Activated CD4-positive, alpha-beta memory T cell treated with anti-CD3 and anti-CD28 coated beads, Interleukin-2, amount 10 ng/mL, durations not matched to agents 7 days and 5 days (primary cell): ENCODE measurements at regions of chr7 and their contacts with region 1.

Region 1: DNA sequence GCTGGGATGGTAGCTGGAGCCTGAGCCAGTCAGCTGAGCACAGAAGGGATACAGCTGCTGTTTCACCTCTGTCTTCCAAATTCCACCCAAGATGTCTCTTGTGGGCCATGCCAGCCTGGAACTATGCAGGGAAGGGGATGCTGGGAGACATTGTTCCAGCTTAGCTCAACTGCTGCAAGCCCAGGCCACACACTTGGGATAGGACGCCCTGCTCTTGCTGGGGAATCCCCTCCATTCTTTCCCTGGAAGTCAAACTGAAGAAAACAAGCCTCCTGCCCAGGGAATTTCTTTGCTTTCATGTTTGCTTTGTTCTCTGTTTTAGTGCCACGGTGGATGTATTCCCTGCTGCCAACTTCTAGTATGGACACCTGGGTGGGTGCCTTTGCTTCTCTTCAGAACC is 55.2 kb upstream of the CDK13 start:
- DNase-seq: no peak
- H3K4me3 Mint-ChIP-seq: no peak overlapping the region
- H3K27ac Mint-ChIP-seq: no peak overlapping the region
- H3K4me1 Mint-ChIP-seq: no peaks in the 10 kb centered on the region
- H3K27me3 Mint-ChIP-seq: peaks cover 15% of the 10 kb centered on the region

Region 2: DNA sequence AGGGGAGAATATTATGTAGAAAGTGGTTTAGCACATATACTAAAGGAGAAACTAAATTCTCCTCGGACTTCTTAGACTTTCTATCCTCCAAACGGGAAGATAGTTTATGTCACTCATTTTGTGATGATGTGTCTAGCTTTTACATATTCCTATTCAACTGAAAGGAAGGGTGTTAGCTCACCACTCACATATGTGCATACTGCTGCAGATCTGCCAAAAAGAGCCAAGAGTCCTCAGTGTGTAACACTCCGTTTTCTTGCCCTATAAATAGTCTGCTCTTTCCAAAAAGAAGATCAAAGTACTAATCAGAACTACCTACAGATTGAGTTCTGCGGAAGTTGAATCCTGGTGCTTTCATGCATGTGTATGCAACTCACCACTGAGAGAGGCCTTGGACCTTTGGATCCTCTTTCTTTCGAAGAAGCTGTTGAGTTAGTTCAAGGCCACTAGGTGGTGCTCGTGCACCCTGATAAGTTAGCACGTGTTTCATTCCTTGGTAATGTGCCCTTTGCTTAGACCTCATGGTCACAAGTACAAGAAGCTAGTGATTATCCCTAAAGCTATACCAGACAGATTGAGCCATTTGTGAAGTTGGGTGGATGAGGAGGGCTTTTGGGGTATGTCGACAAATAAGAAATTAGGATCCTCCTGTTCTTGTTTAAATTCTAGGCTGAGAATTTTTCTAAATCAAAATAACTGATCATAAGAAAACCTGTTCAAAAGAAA is 314.6 kb before region 1 on chr7:
- CTCF ChIA-PET with region 1: interaction called, 28 read pairs
- POLR2A ChIA-PET with region 1: no interaction called
- DNase-seq: peak; percentile 78
- H3K4me3 Mint-ChIP-seq: no peak overlapping the region
- H3K27ac Mint-ChIP-seq: no peak overlapping the region
- H3K4me1 Mint-ChIP-seq: peaks cover 12% of the 10 kb centered on the region
- H3K27me3 Mint-ChIP-seq: no peaks in the 10 kb centered on the region

Region 3: DNA sequence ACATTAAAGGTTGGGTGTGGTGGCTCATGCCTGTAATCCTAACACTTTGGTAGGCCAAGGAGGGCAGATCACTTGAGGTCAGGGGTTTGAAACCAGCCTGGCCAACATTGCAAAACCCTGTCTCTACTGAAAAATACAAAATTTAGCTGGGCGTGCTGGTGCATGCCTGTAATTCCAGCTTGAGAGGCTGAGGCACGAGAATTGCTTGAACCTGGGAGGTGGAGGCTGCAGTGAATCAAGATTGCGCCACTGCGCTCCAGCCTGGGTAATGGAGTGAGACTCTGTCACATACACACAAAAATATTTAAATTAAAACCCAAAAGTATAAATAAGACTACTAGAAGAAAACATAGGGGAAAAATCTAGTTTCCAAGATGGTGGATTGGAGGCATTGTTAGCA is 13.2 kb after region 1 on chr7:
- CTCF ChIA-PET with region 1: interaction called, 13 read pairs
- POLR2A ChIA-PET with region 1: no interaction called
- DNase-seq: no peak
- H3K4me3 Mint-ChIP-seq: no peak overlapping the region
- H3K27ac Mint-ChIP-seq: no peak overlapping the region
- H3K4me1 Mint-ChIP-seq: no peaks in the 10 kb centered on the region
- H3K27me3 Mint-ChIP-seq: no peaks in the 10 kb centered on the region

Region 4: DNA sequence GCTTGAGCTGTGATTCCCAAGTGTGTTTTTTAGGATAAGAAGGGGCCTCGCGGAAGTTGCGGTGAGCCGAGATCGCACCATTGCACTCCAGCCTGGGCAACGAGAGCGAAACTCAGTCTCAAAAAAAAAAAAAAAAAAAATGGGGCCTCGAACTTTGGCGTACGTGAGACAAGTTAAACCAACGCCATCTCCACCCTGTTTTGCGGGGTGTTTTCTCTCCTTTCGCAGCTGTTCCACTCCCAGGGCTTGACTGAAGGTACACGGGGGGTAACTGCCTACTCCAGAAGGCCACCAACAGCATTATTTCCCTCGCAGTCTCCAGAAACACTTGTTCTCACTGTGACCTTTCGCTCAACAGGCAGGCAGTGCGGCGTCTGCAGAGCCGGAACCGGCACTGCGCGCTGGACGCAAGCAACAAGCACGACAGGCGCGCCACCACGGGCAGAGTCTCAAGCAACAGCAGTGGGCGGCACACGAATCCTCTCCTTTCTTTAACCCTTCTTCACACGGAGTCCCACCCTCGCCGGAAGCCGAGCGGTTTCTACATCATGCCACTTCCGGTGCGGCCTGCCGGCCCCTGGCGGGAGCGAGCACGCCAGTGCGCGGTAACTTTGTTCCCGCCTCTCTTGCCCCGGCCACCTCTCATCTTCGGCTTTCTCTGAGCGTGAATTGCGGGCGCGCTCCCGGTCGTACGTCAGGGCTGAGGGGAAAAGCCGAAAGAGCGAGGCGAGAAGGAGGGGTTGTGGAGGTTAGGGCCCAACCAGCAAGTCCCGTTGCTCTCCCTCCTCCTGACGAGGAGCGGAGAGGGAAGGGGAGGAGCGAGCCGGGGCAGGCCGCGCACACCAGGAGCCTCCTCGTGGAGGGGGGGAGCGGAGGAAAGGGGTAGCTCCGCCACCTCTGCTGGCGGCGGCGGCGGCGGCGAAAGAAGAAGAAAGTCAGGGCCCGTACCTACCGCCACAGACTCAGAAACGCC is 54.3 kb after region 1 on chr7:
- CTCF ChIA-PET with region 1: interaction called, 18 read pairs
- POLR2A ChIA-PET with region 1: interaction called, 7 read pairs
- DNase-seq: peak; percentile 99
- H3K4me3 Mint-ChIP-seq: peak overlapping the region; percentile 97
- H3K27ac Mint-ChIP-seq: peak overlapping the region; percentile 100
- H3K4me1 Mint-ChIP-seq: peaks cover 35% of the 10 kb centered on the region
- H3K27me3 Mint-ChIP-seq: no peaks in the 10 kb centered on the region

Region 5: GRCh38 chr7:40047661-40048060 is 152.8 kb after region 1 on chr7:
- CTCF ChIA-PET with region 1: interaction called, 169 read pairs
- POLR2A ChIA-PET with region 1: no interaction called
- DNase-seq: no peak
- H3K4me3 Mint-ChIP-seq: no peak overlapping the region
- H3K27ac Mint-ChIP-seq: no peak overlapping the region
- H3K4me1 Mint-ChIP-seq: peaks cover 2% of the 10 kb centered on the region
- H3K27me3 Mint-ChIP-seq: no peaks in the 10 kb centered on the region

Region 6: GRCh38 chr7:40057292-40057691 is 162.4 kb after region 1 on chr7:
- CTCF ChIA-PET with region 1: interaction called, 169 read pairs
- POLR2A ChIA-PET with region 1: no interaction called
- DNase-seq: no peak
- H3K4me3 Mint-ChIP-seq: no peak overlapping the region
- H3K27ac Mint-ChIP-seq: no peak overlapping the region
- H3K4me1 Mint-ChIP-seq: peaks cover 3% of the 10 kb centered on the region
- H3K27me3 Mint-ChIP-seq: no peaks in the 10 kb centered on the region

Region 7: GRCh38 chr7:40134428-40135316 is 239.8 kb after region 1 on chr7 and contains the starts of genes MPLKIP and SUGCT:
- CTCF ChIA-PET with region 1: interaction called, 12 read pairs
- POLR2A ChIA-PET with region 1: no interaction called
- DNase-seq: peak; percentile 86
- H3K4me3 Mint-ChIP-seq: peak within 1 kb of the TSS; percentile 92
- H3K27ac Mint-ChIP-seq: peak within 1 kb of the TSS; percentile 95
- H3K4me1 Mint-ChIP-seq: peaks cover 21% of the 10 kb centered on the region
- H3K27me3 Mint-ChIP-seq: peaks cover 6% of the 10 kb centered on the region
- total RNA-seq, gene MPLKIP: 34.4 to 35.1 TPM
- total RNA-seq, gene SUGCT: not detected